ENCODE measurements at regions of chr1 and their contacts with region 1.

Region 1: DNA sequence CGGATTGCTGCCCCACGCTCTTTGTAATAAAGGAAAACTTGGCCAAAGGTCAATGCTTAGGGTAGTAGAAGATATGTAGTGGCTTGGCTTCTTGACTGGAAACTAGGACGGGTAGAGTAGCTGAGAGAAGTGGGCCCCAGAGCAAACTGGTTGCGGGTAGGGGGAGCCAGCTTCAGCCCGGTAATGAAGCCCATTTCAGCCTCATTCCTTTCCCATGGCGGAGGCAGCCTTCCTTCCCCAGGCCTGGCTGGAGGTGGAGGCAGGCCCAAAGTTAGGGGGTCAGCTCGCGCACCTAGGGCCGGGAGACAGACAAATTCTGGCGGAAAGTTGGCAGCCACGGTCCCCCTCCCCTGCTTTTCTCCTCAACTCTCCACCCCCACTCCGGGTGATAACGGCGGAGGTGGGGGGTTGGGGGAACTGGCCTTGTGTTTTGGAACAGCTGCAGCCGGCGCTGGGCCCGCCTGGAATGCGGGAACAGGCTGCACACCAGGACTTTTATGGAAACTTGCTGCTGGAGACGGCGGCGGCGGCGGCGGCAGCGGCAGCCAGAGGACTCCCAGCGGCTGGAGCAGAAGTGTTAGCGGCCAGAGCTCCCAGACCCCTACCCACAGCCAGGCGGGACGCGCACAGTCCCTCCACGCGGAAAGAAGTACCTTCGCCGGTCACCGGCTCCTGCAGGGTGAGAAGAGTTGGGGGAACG is at the start of gene NEXN:
- DNase-seq: peak; percentile 53 to 66 (median 63)
- ATAC-seq: peak; percentile 79 to 85 (median 82)
- H3K4me3 ChIP-seq: peak within 1 kb of the TSS; percentile 60 to 64 (median 62)
- H3K27ac ChIP-seq: peak within 1 kb of the TSS; percentile 31 to 68 (median 60)
- H3K4me1 ChIP-seq: no peaks in the 10 kb centered on the region
- H3K27me3 ChIP-seq: no peaks in the 10 kb centered on the region
- CTCF ChIP-seq: no peak
- POLR2A ChIP-seq: peak; percentile 30
- total RNA-seq, gene NEXN: 0.42 to 3.9 (median 1.9) TPM

Region 2: DNA sequence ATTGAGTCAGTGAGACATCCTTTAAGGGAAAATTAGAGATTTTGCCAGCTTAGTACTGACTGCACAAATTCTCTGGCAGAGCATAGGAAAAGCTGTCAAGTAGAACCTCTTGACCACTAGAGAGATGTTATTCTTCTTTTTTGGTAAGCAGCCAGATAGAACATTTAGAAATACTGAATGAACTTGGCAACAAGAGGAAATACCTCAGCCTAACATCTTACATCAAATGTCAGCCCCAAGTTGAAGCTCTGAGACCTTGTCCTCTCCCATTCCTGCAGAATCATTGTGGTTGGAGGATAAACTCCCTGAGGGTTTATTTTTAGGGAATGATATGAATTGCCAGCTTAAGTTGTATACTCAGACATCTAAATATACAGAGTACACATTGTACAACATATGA is 55.3 kb before region 1 on chr1:
- intact Hi-C with region 1: loop called in 1 of 2 experiments (anchors 10 kb)
- DNase-seq: no peak
- ATAC-seq: peak; percentile 33 to 57 (median 46)
- H3K4me3 ChIP-seq: no peak overlapping the region
- H3K27ac ChIP-seq: no peak overlapping the region
- H3K4me1 ChIP-seq: peaks cover 0 to 9% (median 0%) of the 10 kb centered on the region in 4 donors
- H3K27me3 ChIP-seq: no peaks in the 10 kb centered on the region
- CTCF ChIP-seq: no peak
- POLR2A ChIP-seq: no peak